K562 (cell line): ENCODE measurements at regions of chr6 and their contacts with region 1.

Region 1: DNA sequence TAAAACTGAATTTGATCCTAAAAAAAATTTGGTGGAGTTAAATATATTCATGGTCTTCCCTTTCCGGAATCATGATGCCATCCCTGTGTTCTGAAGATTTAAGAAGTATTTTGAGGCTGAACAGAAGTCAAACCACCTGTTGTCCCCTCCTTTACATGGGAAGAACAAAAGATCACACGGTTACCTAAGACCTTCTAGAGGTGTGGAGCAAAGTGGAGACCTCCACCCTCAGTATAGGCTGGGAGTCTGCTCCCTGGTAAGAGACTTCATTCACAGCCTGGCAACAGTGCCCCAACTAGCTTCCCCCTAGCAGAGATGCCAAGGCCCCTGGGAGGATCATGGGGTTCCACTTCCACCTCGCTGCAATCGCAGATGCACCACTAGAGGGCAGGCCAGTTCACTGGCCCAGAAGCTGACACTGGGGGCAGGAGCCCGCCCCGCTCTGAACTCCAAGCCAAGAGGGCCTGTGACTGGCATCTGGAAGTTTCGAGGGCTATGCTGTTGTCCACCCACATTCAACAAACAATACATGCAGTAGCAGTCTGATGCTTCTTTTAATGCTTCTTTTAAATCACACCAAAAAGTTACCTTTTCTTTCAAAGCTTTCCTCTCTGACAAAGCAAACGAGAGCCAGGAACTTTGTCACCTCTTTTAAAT is 19.5 kb upstream of the UBE2J1 start:
- DNase-seq: peak; percentile 68 to 78 (median 72)
- ATAC-seq: peak; percentile 99
- H3K4me3 ChIP-seq: no peak overlapping the region
- H3K27ac ChIP-seq: no peak overlapping the region
- H3K4me1 ChIP-seq: 0 out of 5 replicates have a peak, but pooled peaks cover 0 to 3% of the 10 kb centered on the region in 2 experiments
- H3K27me3 ChIP-seq: peaks cover 0 to 6% of the 10 kb centered on the region in 2 experiments; a peak in 4 of 5 replicates
- CTCF ChIP-seq: peak; percentile 89 to 92 (median 91)
- EP300 ChIP-seq: no peak
- POLR2A ChIP-seq: no peak
- RAD21 ChIP-seq: peak; percentile 60 to 78

Region 2: GRCh38 chr6:89172131-89172530 is 199.8 kb before region 1 on chr6:
- CTCF ChIA-PET with region 1: no interaction called
- POLR2A ChIA-PET with region 1: no interaction called
- in situ Hi-C with region 1: no loop called
- intact Hi-C with region 1: no loop called
- DNase-seq: no peak
- ATAC-seq: no peak
- H3K4me3 ChIP-seq: no peak overlapping the region
- H3K27ac ChIP-seq: no peak overlapping the region
- H3K4me1 ChIP-seq: no peaks in the 10 kb centered on the region
- H3K27me3 ChIP-seq: peaks cover 0 to 5% of the 10 kb centered on the region in 2 experiments; a peak in 4 of 5 replicates
- CTCF ChIP-seq: no peak
- EP300 ChIP-seq: no peak
- POLR2A ChIP-seq: no peak
- RAD21 ChIP-seq: no peak

Region 3: GRCh38 chr6:89311853-89312531 is 60.0 kb before region 1 on chr6:
- CTCF ChIA-PET with region 1: interaction called, 3 read pairs
- POLR2A ChIA-PET with region 1: no interaction called
- in situ Hi-C with region 1: no loop called
- intact Hi-C with region 1: loop called (anchors 1 kb)
- DNase-seq: peak in 1 of 4 experiments; percentile 23
- ATAC-seq: peak; percentile 71
- H3K4me3 ChIP-seq: no peak overlapping the region
- H3K27ac ChIP-seq: no peak overlapping the region
- H3K4me1 ChIP-seq: peaks cover 0 to 2% of the 10 kb centered on the region in 2 experiments; a peak in 1 of 5 replicates
- H3K27me3 ChIP-seq: peaks cover 0 to 11% of the 10 kb centered on the region in 2 experiments; a peak in 1 of 5 replicates
- CTCF ChIP-seq: peak; percentile 46 to 79 (median 61)
- EP300 ChIP-seq: no peak
- POLR2A ChIP-seq: no peak
- RAD21 ChIP-seq: peak; percentile 47 to 69

Region 4: GRCh38 chr6:89335164-89335563 is 36.8 kb before region 1 on chr6:
- CTCF ChIA-PET with region 1: no interaction called
- POLR2A ChIA-PET with region 1: no interaction called
- in situ Hi-C with region 1: no loop called
- intact Hi-C with region 1: no loop called
- DNase-seq: no peak
- ATAC-seq: no peak
- H3K4me3 ChIP-seq: no peak overlapping the region
- H3K27ac ChIP-seq: no peak overlapping the region
- H3K4me1 ChIP-seq: peaks cover 3 to 5% of the 10 kb centered on the region in 2 experiments; a peak in 2 of 5 replicates
- H3K27me3 ChIP-seq: no peaks in the 10 kb centered on the region
- CTCF ChIP-seq: no peak
- EP300 ChIP-seq: no peak
- POLR2A ChIP-seq: no peak
- RAD21 ChIP-seq: no peak

Region 5: DNA sequence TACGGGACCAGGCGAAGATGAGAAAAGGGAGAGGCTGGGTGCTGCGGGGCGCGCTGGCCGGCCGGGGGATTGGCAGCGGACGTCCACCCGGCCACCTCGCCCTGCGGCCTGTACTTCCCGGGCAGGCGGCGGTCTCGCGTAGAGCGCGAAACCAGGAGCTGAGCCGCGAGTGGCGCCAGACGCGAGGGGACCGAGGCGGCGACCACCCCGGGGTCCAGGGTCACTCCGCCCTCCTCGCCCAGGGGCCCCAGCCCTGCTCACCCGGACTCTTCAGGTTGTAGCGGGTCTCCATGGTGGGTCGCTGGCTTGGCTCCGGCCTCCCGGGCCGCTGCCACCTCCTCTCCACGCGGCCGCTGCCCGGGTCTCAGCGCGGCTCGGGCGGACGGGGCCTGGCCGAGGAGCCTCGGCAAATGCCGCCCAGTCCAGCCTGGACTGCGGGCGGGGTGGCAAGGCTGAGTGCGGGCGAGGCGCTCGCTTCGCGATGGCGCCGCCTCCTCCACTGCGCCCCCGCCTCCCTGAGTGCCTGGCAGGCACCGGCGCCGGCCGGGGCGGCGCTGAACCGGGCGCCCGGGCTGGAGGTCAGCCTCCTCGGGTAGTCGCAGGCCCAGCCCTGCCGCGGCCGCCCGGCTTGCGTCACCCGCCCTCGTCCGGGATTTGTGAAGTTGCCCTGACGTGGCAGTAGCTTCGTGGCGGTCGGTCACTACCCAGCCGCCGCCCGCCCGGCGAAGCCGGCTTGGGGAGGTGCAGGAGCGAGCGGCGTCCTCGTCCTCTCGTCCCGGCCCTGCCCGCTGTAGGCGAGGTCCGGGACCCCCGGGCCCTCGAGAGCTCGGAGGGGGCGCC is 19.5 kb before region 1 on chr6 and contains the start of gene UBE2J1:
- CTCF ChIA-PET with region 1: no interaction called
- POLR2A ChIA-PET with region 1: interaction called, 12 read pairs
- in situ Hi-C with region 1: no loop called
- intact Hi-C with region 1: no loop called
- DNase-seq: peak; percentile 78 to 84 (median 82)
- ATAC-seq: peak; percentile 94
- H3K4me3 ChIP-seq: peak within 1 kb of the TSS; percentile 73
- H3K27ac ChIP-seq: peak within 1 kb of the TSS; percentile 91
- H3K4me1 ChIP-seq: peaks cover 18 to 19% of the 10 kb centered on the region in 2 experiments
- H3K27me3 ChIP-seq: no peaks in the 10 kb centered on the region
- CTCF ChIP-seq: no peak
- EP300 ChIP-seq: no peak
- POLR2A ChIP-seq: peak; percentile 80
- RAD21 ChIP-seq: no peak
- polyA plus RNA-seq, gene UBE2J1: 11.6 to 14.9 TPM

Region 6: DNA sequence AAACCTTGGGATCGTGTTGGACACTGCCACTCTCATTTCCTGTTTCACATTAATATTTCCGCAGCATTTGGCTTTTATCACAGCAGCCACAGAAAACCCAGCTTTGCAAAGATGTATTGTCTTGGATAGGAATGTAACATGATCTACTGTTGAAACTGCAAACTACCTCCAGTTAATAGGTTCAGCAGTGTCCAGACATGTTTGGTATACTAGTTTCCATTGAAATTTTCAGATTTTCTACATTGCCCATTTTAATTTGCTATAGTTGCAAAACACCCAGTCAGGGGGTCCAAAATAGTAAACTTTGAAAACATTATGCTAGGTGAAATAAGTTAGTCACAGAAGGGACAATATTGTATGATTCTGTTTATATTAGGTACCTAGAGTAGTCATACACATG is 64.2 kb after region 1 on chr6:
- CTCF ChIA-PET with region 1: no interaction called
- POLR2A ChIA-PET with region 1: no interaction called
- in situ Hi-C with region 1: no loop called
- intact Hi-C with region 1: no loop called
- DNase-seq: no peak
- ATAC-seq: no peak
- H3K4me3 ChIP-seq: no peak overlapping the region
- H3K27ac ChIP-seq: no peak overlapping the region
- H3K4me1 ChIP-seq: peaks cover 5 to 13% of the 10 kb centered on the region in 2 experiments; a peak in 3 of 5 replicates
- H3K27me3 ChIP-seq: peaks cover 16 to 26% of the 10 kb centered on the region in 2 experiments
- CTCF ChIP-seq: no peak
- EP300 ChIP-seq: no peak
- POLR2A ChIP-seq: no peak
- RAD21 ChIP-seq: no peak

Region 7: DNA sequence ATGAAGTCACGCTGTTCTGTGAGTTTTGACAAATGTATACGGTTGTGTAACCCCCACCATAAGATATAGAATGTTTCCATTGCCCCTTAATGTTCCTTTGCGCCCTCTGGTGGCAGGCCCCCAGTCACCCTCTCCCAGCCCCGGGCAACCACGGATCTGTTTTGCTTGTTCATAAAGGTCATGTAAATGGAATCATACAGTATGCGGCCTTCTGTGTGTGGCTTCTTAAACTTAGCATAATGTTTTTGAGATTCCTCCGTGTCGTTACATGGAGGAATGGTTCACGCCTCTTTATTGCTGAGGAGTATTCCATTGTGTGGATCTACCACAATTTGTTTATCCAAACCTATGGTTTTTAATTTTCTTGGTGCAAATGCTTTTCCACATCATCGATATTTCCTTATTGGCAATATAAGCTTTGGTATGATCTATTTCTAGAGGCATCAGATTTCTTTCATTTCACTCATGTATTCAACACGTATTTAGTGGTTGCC is 238.2 kb after region 1 on chr6:
- CTCF ChIA-PET with region 1: interaction called, 3 read pairs
- POLR2A ChIA-PET with region 1: interaction called, 3 read pairs
- in situ Hi-C with region 1: no loop called
- intact Hi-C with region 1: loop called (anchors 2 kb)
- DNase-seq: peak; percentile 72 to 76 (median 74)
- ATAC-seq: peak; percentile 94
- H3K4me3 ChIP-seq: no peak overlapping the region
- H3K27ac ChIP-seq: no peak overlapping the region
- H3K4me1 ChIP-seq: no peaks in the 10 kb centered on the region
- H3K27me3 ChIP-seq: peaks cover 4 to 20% of the 10 kb centered on the region in 2 experiments; a peak in 4 of 5 replicates
- CTCF ChIP-seq: peak; percentile 69 to 91 (median 87)
- EP300 ChIP-seq: no peak
- POLR2A ChIP-seq: no peak
- RAD21 ChIP-seq: peak; percentile 71 to 80